ENCODE measurements at regions of chr3 and their contacts with region 1.

Region 1: GRCh38 chr3:52934630-52935530 is 37.5 kb upstream of the STIMATE start:
- DNase-seq: peak; percentile 84
- H3K4me3 Mint-ChIP-seq: no peak overlapping the region
- H3K27ac Mint-ChIP-seq: peak overlapping the region; percentile 9
- H3K4me1 Mint-ChIP-seq: peaks cover 8% of the 10 kb centered on the region
- H3K27me3 Mint-ChIP-seq: no peaks in the 10 kb centered on the region

Region 2: GRCh38 chr3:52742418-52743041 is 192.3 kb before region 1 on chr3:
- intact Hi-C with region 1: loop called (anchors 10 kb)
- DNase-seq: peak; percentile 69
- H3K4me3 Mint-ChIP-seq: no peak overlapping the region
- H3K27ac Mint-ChIP-seq: no peak overlapping the region
- H3K4me1 Mint-ChIP-seq: no peaks in the 10 kb centered on the region
- H3K27me3 Mint-ChIP-seq: no peaks in the 10 kb centered on the region

Region 3: GRCh38 chr3:52851348-52851747 is 83.5 kb before region 1 on chr3:
- intact Hi-C with region 1: loop called (anchors 5 kb)
- DNase-seq: peak; percentile 76
- H3K4me3 Mint-ChIP-seq: no peak overlapping the region
- H3K27ac Mint-ChIP-seq: no peak overlapping the region
- H3K4me1 Mint-ChIP-seq: no peaks in the 10 kb centered on the region
- H3K27me3 Mint-ChIP-seq: no peaks in the 10 kb centered on the region

Region 4: GRCh38 chr3:52983336-52983807 is 48.5 kb after region 1 on chr3:
- intact Hi-C with region 1: loop called (anchors 2 kb)
- DNase-seq: peak; percentile 92
- H3K4me3 Mint-ChIP-seq: peak overlapping the region; percentile 68
- H3K27ac Mint-ChIP-seq: peak overlapping the region; percentile 84
- H3K4me1 Mint-ChIP-seq: peaks cover 29% of the 10 kb centered on the region
- H3K27me3 Mint-ChIP-seq: no peaks in the 10 kb centered on the region

Region 5: GRCh38 chr3:53072653-53073552 is 138.0 kb after region 1 on chr3:
- intact Hi-C with region 1: loop called (anchors 1 kb)
- DNase-seq: peak; percentile 97
- H3K4me3 Mint-ChIP-seq: peak overlapping the region; percentile 92
- H3K27ac Mint-ChIP-seq: peak overlapping the region; percentile 94
- H3K4me1 Mint-ChIP-seq: peaks cover 18% of the 10 kb centered on the region
- H3K27me3 Mint-ChIP-seq: no peaks in the 10 kb centered on the region